ENCODE measurements at regions of chr1 and their contacts with region 1.

Region 1: GRCh38 chr1:91712981-91713841 is 172.7 kb downstream of the TGFBR3 start:
- DNase-seq: peak; percentile 77
- H3K4me3 Mint-ChIP-seq: peak overlapping the region; percentile 24
- H3K27ac Mint-ChIP-seq: peak overlapping the region; percentile 71
- H3K4me1 Mint-ChIP-seq: peaks cover 25% of the 10 kb centered on the region
- H3K27me3 Mint-ChIP-seq: no peaks in the 10 kb centered on the region

Region 2: DNA sequence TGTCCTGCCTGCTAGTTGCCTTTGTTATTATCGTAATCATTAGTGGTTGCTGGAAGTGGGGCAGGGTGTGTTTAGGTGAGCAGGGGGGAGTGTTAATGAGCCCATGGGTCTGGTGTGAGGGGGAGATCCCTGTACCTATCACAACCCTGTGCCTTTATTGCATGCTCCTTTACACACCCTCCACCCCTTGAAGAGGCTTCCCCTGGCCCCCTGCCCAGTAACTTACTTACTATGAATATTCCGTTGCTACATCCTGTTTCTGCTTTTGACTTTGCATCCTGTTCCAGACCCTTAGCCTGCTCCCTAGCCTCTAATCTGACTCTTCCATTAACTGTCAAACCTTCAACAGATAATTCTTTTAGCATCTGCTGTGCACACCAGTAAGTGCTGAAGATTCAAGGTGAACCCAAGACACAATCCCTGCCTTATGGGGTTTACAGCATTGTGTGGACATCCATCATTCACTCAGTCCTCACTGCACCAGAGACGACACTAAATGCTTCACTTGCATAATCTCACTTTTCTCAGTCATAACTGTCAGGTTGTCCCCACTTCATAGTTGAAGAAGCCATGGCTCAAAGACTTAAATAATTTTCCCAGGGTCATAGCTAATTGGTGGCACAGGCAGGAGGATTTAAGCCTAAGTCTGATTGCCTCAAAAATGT is 164.7 kb before region 1 on chr1:
- CTCF ChIA-PET with region 1: no interaction called
- POLR2A ChIA-PET with region 1: no interaction called
- intact Hi-C with region 1: loop called (anchors 2 kb)
- DNase-seq: peak; percentile 47
- H3K4me3 Mint-ChIP-seq: no peak overlapping the region
- H3K27ac Mint-ChIP-seq: peak overlapping the region; percentile 70
- H3K4me1 Mint-ChIP-seq: peaks cover 64% of the 10 kb centered on the region
- H3K27me3 Mint-ChIP-seq: no peaks in the 10 kb centered on the region

Region 3: GRCh38 chr1:91697416-91697815 is 15.8 kb before region 1 on chr1:
- CTCF ChIA-PET with region 1: no interaction called
- POLR2A ChIA-PET with region 1: no interaction called
- intact Hi-C with region 1: loop called (anchors 1 kb)
- DNase-seq: peak; percentile 77
- H3K4me3 Mint-ChIP-seq: peak overlapping the region; percentile 48
- H3K27ac Mint-ChIP-seq: peak overlapping the region; percentile 54
- H3K4me1 Mint-ChIP-seq: peaks cover 31% of the 10 kb centered on the region
- H3K27me3 Mint-ChIP-seq: no peaks in the 10 kb centered on the region

Region 4: GRCh38 chr1:91732291-91733107 is 19.3 kb after region 1 on chr1:
- CTCF ChIA-PET with region 1: interaction called, 6 read pairs
- POLR2A ChIA-PET with region 1: interaction called, 11 read pairs
- intact Hi-C with region 1: loop called (anchors 1 kb)
- DNase-seq: peak; percentile 65
- H3K4me3 Mint-ChIP-seq: peak overlapping the region; percentile 24
- H3K27ac Mint-ChIP-seq: peak overlapping the region; percentile 29
- H3K4me1 Mint-ChIP-seq: peaks cover 50% of the 10 kb centered on the region
- H3K27me3 Mint-ChIP-seq: no peaks in the 10 kb centered on the region

Region 5: DNA sequence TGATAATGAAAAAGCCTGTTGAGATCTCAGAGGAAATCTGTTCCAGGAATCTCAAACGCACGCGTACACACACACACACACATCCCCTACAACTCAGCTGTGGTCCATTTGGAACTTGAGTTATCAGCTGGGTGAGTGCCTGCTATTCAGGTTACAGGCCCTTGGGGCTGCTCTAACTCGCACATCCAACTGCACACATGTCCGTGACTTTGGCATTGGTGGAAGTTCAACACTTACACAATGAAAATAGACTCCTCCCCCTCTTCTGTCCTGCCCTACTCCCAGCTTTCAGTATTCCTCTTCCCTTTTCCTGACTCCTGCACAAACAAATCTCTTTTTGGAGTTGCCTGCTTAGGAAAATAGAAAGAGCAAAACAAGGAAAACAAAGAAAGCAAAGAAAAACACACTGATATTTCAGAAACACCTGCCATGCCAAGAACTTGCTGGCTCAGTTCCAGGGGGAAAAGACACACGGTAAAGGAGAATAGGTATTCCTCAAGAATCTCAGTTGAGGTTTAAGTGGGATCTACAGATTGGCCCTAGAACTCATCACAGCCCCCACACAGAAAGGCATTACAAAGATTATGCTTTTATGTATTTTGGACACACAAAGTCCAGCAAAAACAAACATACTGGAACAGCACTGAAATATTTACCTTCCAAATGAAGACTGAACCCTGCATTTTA is 31.9 kb after region 1 on chr1:
- CTCF ChIA-PET with region 1: no interaction called
- POLR2A ChIA-PET with region 1: no interaction called
- intact Hi-C with region 1: no loop called
- DNase-seq: no peak
- H3K4me3 Mint-ChIP-seq: no peak overlapping the region
- H3K27ac Mint-ChIP-seq: no peak overlapping the region
- H3K4me1 Mint-ChIP-seq: peaks cover 8% of the 10 kb centered on the region
- H3K27me3 Mint-ChIP-seq: no peaks in the 10 kb centered on the region